Calu3 (cell line): ENCODE measurements at regions of chr2 and their contacts with region 1.

Region 1: GRCh38 chr2:180077295-180077906 is 70.3 kb upstream of the CWC22 start:
- DNase-seq: no peak
- H3K4me3 Mint-ChIP-seq: no peak overlapping the region
- H3K27ac Mint-ChIP-seq: no peak overlapping the region
- H3K4me1 Mint-ChIP-seq: no peaks in the 10 kb centered on the region
- H3K27me3 Mint-ChIP-seq: no peaks in the 10 kb centered on the region
- CTCF ChIP-seq: peak; percentile 71

Region 2: GRCh38 chr2:179818546-179818945 is 258.9 kb before region 1 on chr2:
- CTCF ChIA-PET with region 1: no interaction called
- intact Hi-C with region 1: no loop called
- DNase-seq: no peak
- H3K4me3 Mint-ChIP-seq: no peak overlapping the region
- H3K27ac Mint-ChIP-seq: no peak overlapping the region
- H3K4me1 Mint-ChIP-seq: peaks cover 12% of the 10 kb centered on the region
- H3K27me3 Mint-ChIP-seq: no peaks in the 10 kb centered on the region
- CTCF ChIP-seq: no peak

Region 3: GRCh38 chr2:179842498-179843153 is 234.8 kb before region 1 on chr2:
- CTCF ChIA-PET with region 1: no interaction called
- intact Hi-C with region 1: loop called (anchors 1 kb)
- DNase-seq: peak; percentile 30
- H3K4me3 Mint-ChIP-seq: no peak overlapping the region
- H3K27ac Mint-ChIP-seq: no peak overlapping the region
- H3K4me1 Mint-ChIP-seq: no peaks in the 10 kb centered on the region
- H3K27me3 Mint-ChIP-seq: peaks cover 22% of the 10 kb centered on the region
- CTCF ChIP-seq: peak; percentile 35

Region 4: GRCh38 chr2:179987916-179988315 is 89.5 kb before region 1 on chr2:
- CTCF ChIA-PET with region 1: no interaction called
- intact Hi-C with region 1: loop called (anchors 1 kb)
- DNase-seq: no peak
- H3K4me3 Mint-ChIP-seq: no peak overlapping the region
- H3K27ac Mint-ChIP-seq: no peak overlapping the region
- H3K4me1 Mint-ChIP-seq: peaks cover 11% of the 10 kb centered on the region
- H3K27me3 Mint-ChIP-seq: no peaks in the 10 kb centered on the region
- CTCF ChIP-seq: no peak

Region 5: DNA sequence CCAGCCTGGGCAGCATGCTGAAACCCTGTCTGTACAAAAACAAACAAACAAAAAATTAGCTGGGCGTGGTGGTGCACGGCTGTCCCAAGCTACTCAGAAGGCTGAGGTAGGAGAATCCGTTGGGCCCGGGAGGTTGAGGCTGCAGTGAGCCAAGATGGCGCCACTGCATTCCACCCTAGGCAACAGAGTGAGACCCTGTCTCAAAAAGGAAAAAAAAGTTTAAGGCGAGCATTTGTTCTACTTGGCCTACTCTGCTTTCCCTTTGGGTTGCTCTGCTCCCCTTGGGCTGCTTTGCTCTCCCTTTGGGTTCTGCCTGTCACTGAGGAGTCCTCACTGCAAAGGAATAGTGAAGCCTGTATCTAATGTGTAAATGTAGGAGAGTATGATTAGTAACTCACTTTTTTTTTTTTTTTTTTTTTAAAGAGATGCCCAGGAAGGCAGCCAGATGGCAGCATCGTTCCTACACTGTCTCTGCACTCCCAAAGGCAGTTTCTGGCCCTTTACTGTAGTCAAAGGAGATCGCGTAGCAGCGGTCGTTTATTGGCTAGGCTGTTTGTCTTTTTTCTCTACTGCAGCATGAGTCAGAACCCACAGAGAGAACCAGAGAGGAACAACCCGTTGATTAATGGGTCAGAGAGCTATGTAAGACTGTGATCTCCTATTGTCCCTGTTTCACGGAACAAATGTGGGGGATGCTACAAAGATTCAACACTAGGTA is 48.0 kb after region 1 on chr2:
- CTCF ChIA-PET with region 1: no interaction called
- intact Hi-C with region 1: no loop called
- DNase-seq: peak; percentile 51
- H3K4me3 Mint-ChIP-seq: no peak overlapping the region
- H3K27ac Mint-ChIP-seq: no peak overlapping the region
- H3K4me1 Mint-ChIP-seq: peaks cover 23% of the 10 kb centered on the region
- H3K27me3 Mint-ChIP-seq: no peaks in the 10 kb centered on the region
- CTCF ChIP-seq: peak; percentile 68